Activated CD4-positive, alpha-beta T cell treated with anti-CD3 and anti-CD28 coated beads, Interleukin-2, amount 10 ng/mL, durations not matched to agents 7 days and 5 days (primary cell): ENCODE measurements at regions of chr4 and their contacts with region 1.

Region 1: DNA sequence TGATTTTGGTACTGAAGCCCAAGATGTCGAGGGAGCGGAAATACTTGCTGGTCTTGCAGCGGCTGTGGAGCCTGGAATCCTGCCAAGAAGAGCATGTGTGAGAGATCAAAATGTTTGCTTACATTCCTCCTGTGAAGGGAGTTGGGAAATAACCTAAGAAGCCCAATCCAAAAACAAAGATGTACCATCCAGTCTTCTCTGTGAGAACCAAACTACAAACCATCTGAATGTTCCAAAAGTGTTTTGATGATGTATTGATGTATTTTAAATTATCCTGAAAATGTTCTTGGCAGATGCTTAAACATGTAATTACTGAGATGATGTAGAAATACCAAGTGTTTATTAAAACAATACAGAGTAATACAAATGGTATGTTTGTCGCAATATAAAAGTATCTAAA is 10.1 kb upstream of the ADH1A start:
- DNase-seq: no peak
- H3K4me3 Mint-ChIP-seq: no peak overlapping the region
- H3K27ac Mint-ChIP-seq: no peak overlapping the region
- H3K4me1 Mint-ChIP-seq: no peaks in the 10 kb centered on the region
- H3K27me3 Mint-ChIP-seq: peaks cover 2% of the 10 kb centered on the region

Region 2: GRCh38 chr4:99324979-99325378 is 24.0 kb after region 1 on chr4:
- CTCF ChIA-PET with region 1: no interaction called
- POLR2A ChIA-PET with region 1: no interaction called
- DNase-seq: no peak
- H3K4me3 Mint-ChIP-seq: no peak overlapping the region
- H3K27ac Mint-ChIP-seq: no peak overlapping the region
- H3K4me1 Mint-ChIP-seq: no peaks in the 10 kb centered on the region
- H3K27me3 Mint-ChIP-seq: peaks cover 7% of the 10 kb centered on the region

Region 3: DNA sequence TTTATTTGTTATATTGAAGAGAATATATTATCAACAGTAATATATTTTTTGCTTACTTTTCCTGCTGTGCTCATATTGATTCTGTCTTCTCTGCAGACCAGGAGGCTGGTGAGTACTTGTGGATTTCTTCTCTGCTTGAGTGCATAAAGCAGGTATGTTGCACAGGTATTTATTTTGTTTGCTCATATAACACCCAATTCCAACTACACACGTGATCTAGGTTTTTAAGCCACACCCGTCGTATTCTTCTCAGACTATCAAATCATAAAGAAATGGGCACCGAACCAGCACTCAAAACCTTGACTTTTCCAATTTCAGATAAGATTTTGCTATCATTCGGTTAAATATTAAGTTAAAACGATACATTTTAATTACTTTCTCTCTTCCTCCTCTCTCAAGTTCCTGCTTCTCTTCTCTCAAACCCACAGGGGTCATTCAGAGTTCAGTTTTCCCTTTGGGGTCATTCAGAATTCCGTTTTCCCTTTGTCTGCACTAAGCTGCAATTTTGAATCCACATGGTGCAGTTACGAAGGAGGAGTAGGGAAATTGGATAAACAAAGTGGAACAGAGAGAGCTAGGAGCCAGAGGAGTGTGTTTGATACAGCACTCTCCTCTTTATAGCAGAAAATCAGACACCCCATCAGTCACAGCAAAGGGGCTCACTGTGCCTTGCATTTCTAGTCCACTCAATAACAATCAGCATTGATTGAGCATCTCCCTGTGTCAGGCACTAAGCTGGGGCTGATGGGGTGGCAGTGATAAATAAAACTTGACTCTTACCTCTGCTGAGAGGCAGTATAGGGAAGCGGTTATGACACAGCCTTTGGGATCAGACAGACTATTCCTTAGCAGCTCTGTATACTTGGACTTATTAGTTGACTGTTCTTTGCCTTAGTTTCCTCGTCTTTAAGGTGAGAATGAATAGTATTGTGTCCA is 51.9 kb after region 1 on chr4 and contains the start of gene ADH1C:
- CTCF ChIA-PET with region 1: no interaction called
- POLR2A ChIA-PET with region 1: interaction called, 16 read pairs
- DNase-seq: no peak
- H3K4me3 Mint-ChIP-seq: no peak within 1 kb of the TSS
- H3K27ac Mint-ChIP-seq: no peak within 1 kb of the TSS
- H3K4me1 Mint-ChIP-seq: peaks cover 10% of the 10 kb centered on the region
- H3K27me3 Mint-ChIP-seq: peaks cover 7% of the 10 kb centered on the region
- total RNA-seq, gene ADH1C: not detected